ENCODE measurements at regions of chr10 and their contacts with region 1.

Region 1: GRCh38 chr10:96319754-96320474 is 15.7 kb downstream of the DNTT start:
- DNase-seq: no peak
- ATAC-seq: no peak
- H3K4me3 ChIP-seq: no peak overlapping the region
- H3K4me3 Mint-ChIP-seq: no peak overlapping the region
- H3K27ac ChIP-seq: no peak overlapping the region
- H3K27ac Mint-ChIP-seq: no peak overlapping the region
- H3K4me1 ChIP-seq: no peaks in the 10 kb centered on the region
- H3K4me1 Mint-ChIP-seq: no peaks in the 10 kb centered on the region
- H3K27me3 ChIP-seq: no peaks in the 10 kb centered on the region
- H3K27me3 Mint-ChIP-seq: peaks cover 13% of the 10 kb centered on the region
- CTCF ChIP-seq: no peak

Region 2: GRCh38 chr10:96334616-96335526 is 15.0 kb after region 1 on chr10:
- CTCF ChIA-PET with region 1: interaction called, 11 read pairs
- POLR2A ChIA-PET with region 1: no interaction called
- intact Hi-C with region 1: no loop called
- DNase-seq: peak in 2 of 9 experiments; percentile 30
- ATAC-seq: no peak
- H3K4me3 ChIP-seq: no peak overlapping the region
- H3K4me3 Mint-ChIP-seq: no peak overlapping the region
- H3K27ac ChIP-seq: no peak overlapping the region
- H3K27ac Mint-ChIP-seq: no peak overlapping the region
- H3K4me1 ChIP-seq: peaks cover 14% of the 10 kb centered on the region
- H3K4me1 Mint-ChIP-seq: peaks cover 28% of the 10 kb centered on the region
- H3K27me3 ChIP-seq: no peaks in the 10 kb centered on the region
- H3K27me3 Mint-ChIP-seq: peaks cover 11% of the 10 kb centered on the region
- CTCF ChIP-seq: peak; percentile 32

Region 3: GRCh38 chr10:96352582-96352981 is 32.7 kb after region 1 on chr10:
- CTCF ChIA-PET with region 1: no interaction called
- POLR2A ChIA-PET with region 1: no interaction called
- intact Hi-C with region 1: no loop called
- DNase-seq: no peak
- ATAC-seq: no peak
- H3K4me3 ChIP-seq: no peak overlapping the region
- H3K4me3 Mint-ChIP-seq: no peak overlapping the region
- H3K27ac ChIP-seq: no peak overlapping the region
- H3K27ac Mint-ChIP-seq: no peak overlapping the region
- H3K4me1 ChIP-seq: no peaks in the 10 kb centered on the region
- H3K4me1 Mint-ChIP-seq: no peaks in the 10 kb centered on the region
- H3K27me3 ChIP-seq: no peaks in the 10 kb centered on the region
- H3K27me3 Mint-ChIP-seq: peaks cover 13% of the 10 kb centered on the region
- CTCF ChIP-seq: no peak

Region 4: GRCh38 chr10:96380817-96381216 is 60.9 kb after region 1 on chr10:
- CTCF ChIA-PET with region 1: no interaction called
- POLR2A ChIA-PET with region 1: no interaction called
- intact Hi-C with region 1: no loop called
- DNase-seq: peak in 1 of 9 experiments; percentile 14
- ATAC-seq: no peak
- H3K4me3 ChIP-seq: no peak overlapping the region
- H3K4me3 Mint-ChIP-seq: no peak overlapping the region
- H3K27ac ChIP-seq: no peak overlapping the region
- H3K27ac Mint-ChIP-seq: no peak overlapping the region
- H3K4me1 ChIP-seq: no peaks in the 10 kb centered on the region
- H3K4me1 Mint-ChIP-seq: no peaks in the 10 kb centered on the region
- H3K27me3 ChIP-seq: no peaks in the 10 kb centered on the region
- H3K27me3 Mint-ChIP-seq: peaks cover 20% of the 10 kb centered on the region
- CTCF ChIP-seq: no peak